Cardiac septum (tissue), 1 donor: ENCODE measurements at regions of chr3 and their contacts with region 1.

Region 1: DNA sequence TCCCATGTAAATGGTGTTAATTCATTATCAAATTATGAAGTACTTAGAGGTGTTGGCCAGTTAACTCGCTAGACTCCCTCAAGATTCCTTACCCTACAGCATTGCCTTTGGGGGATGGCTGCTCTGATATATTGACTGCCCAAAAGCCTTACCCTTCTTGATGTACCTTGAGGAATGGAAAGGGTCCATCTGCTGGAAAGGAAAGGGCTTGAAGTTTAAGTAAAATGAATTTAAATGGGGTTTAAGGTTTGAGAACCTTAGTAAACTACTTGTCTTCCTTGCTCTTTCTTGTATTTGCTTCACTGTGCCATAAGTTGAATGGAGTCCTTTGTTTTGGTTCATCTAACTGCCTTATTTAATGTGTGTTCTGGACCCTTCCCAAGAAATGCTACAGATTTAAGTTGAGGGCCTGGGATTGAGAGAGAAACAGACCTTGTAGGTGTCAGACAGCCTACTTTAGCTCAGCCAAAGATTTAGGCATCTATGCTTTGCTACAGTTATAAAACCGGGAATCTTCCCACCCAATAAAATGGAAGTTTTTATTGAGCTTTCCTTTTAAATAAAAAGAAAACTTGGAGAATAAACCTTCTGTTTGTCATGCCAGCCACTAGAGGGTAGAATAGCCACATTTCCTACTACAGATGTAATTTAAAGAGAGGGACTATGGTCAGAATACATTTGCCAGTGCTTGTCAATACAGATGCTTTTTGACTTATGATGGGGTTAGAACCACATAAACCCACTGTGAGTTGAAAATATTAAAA is 25.3 kb downstream of the CMSS1 start:
- DNase-seq: no peak

Region 2: GRCh38 chr3:99920481-99921376 is 77.7 kb after region 1 on chr3:
- intact Hi-C with region 1: loop called (anchors 5 kb)
- DNase-seq: peak; percentile 83

Region 3: GRCh38 chr3:100006570-100007271 is 163.7 kb after region 1 on chr3:
- intact Hi-C with region 1: loop called (anchors 2 kb)
- DNase-seq: no peak

Region 4: DNA sequence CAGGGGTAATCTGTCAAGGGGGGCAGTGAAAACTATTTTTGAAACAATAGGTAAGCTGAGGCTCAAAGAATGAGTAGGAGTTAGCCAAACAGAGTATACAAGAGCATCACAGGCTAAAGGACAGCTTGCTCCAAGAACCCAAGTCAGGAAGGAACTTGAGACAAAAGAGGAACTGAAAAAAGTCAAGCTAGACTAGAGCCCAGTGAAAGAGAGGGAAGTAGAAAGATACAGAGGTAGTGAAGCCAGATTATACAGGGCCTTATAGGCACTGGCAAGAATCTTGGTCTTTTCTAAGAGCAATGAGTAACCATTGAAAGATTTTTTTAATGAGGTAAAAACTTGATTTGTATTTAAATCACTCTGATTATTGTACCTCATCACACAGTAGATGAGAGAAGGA is 201.4 kb after region 1 on chr3:
- intact Hi-C with region 1: loop called (anchors 2 kb)
- DNase-seq: no peak

Region 5: GRCh38 chr3:100068826-100069225 is 225.8 kb after region 1 on chr3:
- intact Hi-C with region 1: loop called (anchors 5 kb)
- DNase-seq: peak; percentile 90

Region 6: DNA sequence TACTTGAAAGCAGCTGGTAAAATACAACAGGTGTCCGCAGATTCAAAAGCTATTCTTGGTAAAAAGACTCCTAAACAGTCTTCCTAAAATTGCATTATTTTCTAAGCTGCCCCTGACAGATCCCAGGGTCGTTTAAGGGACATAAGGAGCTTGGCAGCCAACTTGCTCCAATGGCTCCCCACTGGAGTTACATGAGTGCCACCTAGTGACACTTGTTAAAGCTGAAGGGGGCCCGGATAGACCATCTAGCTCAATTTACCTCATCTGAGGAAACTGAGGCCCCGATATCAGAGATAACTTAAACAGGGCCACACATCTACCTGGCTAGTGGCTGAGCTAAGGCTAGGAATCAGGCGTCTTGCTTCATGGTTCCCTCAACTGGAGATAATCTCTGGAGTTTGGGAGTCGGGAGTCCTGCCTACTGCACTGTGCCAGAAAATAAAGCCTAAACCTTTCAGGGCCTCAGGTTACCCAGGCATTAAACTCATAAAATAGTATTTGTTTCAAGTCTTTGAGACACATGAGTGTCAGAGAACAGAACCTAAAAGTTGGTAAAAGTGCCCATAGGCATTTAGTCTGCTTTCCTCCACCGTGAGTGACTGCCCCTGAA is 411.3 kb after region 1 on chr3:
- intact Hi-C with region 1: loop called (anchors 5 kb)
- DNase-seq: no peak